GM12878 (cell line): ENCODE measurements at regions of chr13 and their contacts with region 1.

Region 1: GRCh38 chr13:103291798-103292572 is 225.8 kb upstream of the SLC10A2 start:
- DNase-seq: no peak
- ATAC-seq: peak; percentile 69
- H3K4me3 ChIP-seq: no peak overlapping the region
- H3K27ac ChIP-seq: no peak overlapping the region
- H3K4me1 ChIP-seq: no peaks in the 10 kb centered on the region
- H3K27me3 ChIP-seq: no peaks in the 10 kb centered on the region
- CTCF ChIP-seq: no peak
- EP300 ChIP-seq: no peak
- POLR2A ChIP-seq: no peak
- RAD21 ChIP-seq: no peak

Region 2: GRCh38 chr13:103263448-103263847 is 28.5 kb before region 1 on chr13:
- CTCF ChIA-PET with region 1: no interaction called
- POLR2A ChIA-PET with region 1: no interaction called
- RAD21 ChIA-PET with region 1: no interaction called
- SMC1A ChIA-PET with region 1: no interaction called
- in situ Hi-C with region 1: no loop called
- intact Hi-C with region 1: loop called (anchors 1 kb)
- DNase-seq: no peak
- ATAC-seq: no peak
- H3K4me3 ChIP-seq: no peak overlapping the region
- H3K27ac ChIP-seq: no peak overlapping the region
- H3K4me1 ChIP-seq: no peaks in the 10 kb centered on the region
- H3K27me3 ChIP-seq: no peaks in the 10 kb centered on the region
- CTCF ChIP-seq: no peak
- EP300 ChIP-seq: no peak
- POLR2A ChIP-seq: no peak
- RAD21 ChIP-seq: no peak

Region 3: DNA sequence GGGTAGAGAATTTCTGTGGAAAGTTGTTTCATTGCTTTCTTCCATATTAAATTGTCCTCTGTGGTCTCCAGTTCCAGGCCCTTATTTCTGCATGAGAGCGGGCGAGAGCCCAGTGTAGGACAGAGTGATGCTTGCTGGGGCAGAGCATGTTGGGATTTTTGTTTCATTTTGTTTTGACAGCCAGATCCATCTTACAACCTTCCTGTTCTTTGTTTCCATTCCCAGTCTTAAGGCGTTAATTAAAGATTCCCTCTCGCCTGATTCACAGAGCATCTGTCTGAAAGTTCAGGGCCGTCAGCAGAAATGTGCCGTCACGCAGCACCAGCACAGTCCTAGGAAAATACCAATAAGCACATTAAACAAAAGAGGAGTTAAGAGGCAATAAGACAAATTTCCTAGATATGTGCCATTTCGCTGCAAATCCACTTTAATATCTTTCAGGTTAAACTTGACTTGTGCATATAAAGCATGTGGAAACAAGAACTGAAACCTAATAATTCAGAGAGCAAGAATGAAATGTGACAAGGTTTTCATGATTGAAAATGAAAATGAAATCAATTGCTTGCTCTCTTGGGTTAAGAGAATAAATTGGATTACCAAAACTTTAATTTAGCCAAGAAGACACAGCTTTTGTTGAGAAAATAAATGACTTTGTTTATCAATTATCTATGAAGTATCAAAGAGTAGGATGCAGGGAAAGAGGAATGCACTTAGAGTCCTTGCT is 15.0 kb before region 1 on chr13:
- CTCF ChIA-PET with region 1: interaction called, 3 read pairs
- POLR2A ChIA-PET with region 1: interaction called, 5 read pairs
- RAD21 ChIA-PET with region 1: interaction called, 24 read pairs
- SMC1A ChIA-PET with region 1: interaction called, 41 read pairs
- in situ Hi-C with region 1: no loop called
- intact Hi-C with region 1: no loop called
- DNase-seq: peak; percentile 53
- ATAC-seq: peak; percentile 91
- H3K4me3 ChIP-seq: no peak overlapping the region
- H3K27ac ChIP-seq: 0 out of 2 replicates have a peak overlapping the region, but pooled peaks have one; percentile 6
- H3K4me1 ChIP-seq: peaks cover 25% of the 10 kb centered on the region
- H3K27me3 ChIP-seq: no peaks in the 10 kb centered on the region
- CTCF ChIP-seq: no peak
- EP300 ChIP-seq: peak; percentile 49 to 89
- POLR2A ChIP-seq: no peak
- RAD21 ChIP-seq: no peak

Region 4: DNA sequence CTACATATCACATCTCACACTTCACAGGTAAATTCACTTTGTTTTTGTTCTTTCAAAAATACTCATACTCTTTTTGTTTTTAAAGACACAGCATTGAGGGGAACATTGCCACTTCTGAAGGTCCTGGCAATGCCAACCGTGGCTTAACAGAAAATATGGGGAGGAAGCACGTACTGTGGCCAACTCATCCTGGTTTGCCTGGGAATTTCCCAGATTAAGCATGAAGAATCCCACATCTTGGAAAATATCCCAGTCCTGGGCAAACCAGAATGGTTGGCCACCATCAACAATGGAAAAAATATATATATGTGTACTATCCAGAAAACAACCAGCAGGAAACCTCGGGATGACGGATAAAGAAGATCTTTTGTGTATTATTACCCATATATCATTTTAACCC is 806.4 kb after region 1 on chr13:
- CTCF ChIA-PET with region 1: no interaction called
- POLR2A ChIA-PET with region 1: no interaction called
- RAD21 ChIA-PET with region 1: no interaction called
- SMC1A ChIA-PET with region 1: no interaction called
- in situ Hi-C with region 1: no loop called
- intact Hi-C with region 1: no loop called
- DNase-seq: no peak
- ATAC-seq: no peak
- H3K4me3 ChIP-seq: no peak overlapping the region
- H3K27ac ChIP-seq: no peak overlapping the region
- H3K4me1 ChIP-seq: no peaks in the 10 kb centered on the region
- H3K27me3 ChIP-seq: no peaks in the 10 kb centered on the region
- CTCF ChIP-seq: no peak
- EP300 ChIP-seq: no peak
- POLR2A ChIP-seq: no peak
- RAD21 ChIP-seq: no peak